RWPE1 (cell line): ENCODE measurements at regions of chr11 and their contacts with region 1.

Region 1: GRCh38 chr11:62427630-62428233 is 8.9 kb downstream of the SCGB1A1 start:
- DNase-seq: no peak
- H3K27ac ChIP-seq: peak overlapping the region; percentile 40; the same call in 1 of the 2 replicates
- CTCF ChIP-seq: no peak

Region 2: GRCh38 chr11:62402960-62403730 is 24.6 kb before region 1 on chr11:
- CTCF ChIA-PET with region 1: interaction called, 11 read pairs
- POLR2A ChIA-PET with region 1: no interaction called
- DNase-seq: no peak
- H3K27ac ChIP-seq: no peak overlapping the region
- CTCF ChIP-seq: no peak

Region 3: DNA sequence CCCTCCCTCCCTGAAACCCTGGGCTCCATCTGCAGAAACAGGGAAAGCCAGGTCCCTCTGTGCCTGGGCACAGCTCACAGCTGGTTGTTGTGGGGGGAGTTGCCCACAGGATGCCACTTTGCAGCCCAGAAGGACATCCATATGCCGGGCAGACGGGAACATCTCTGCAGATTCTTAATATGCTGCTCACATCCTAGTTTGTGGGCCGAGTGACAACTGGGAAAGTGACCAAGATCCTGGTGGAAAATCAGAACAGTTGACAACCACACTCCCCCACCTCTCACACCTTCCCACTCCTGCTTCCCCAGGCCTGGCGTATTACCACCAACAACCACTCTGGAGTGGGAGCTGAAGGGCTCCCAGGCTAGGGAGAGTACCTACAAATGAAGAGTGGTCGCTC is 16.2 kb before region 1 on chr11:
- CTCF ChIA-PET with region 1: interaction called, 16 read pairs
- POLR2A ChIA-PET with region 1: no interaction called
- DNase-seq: no peak
- H3K27ac ChIP-seq: peak overlapping the region; percentile 83
- CTCF ChIP-seq: no peak

Region 4: GRCh38 chr11:62556108-62556871 is 128.6 kb after region 1 on chr11:
- CTCF ChIA-PET with region 1: interaction called, 14 read pairs
- POLR2A ChIA-PET with region 1: no interaction called
- DNase-seq: peak; percentile 99
- H3K27ac ChIP-seq: peak overlapping the region; percentile 100
- CTCF ChIP-seq: no peak

Region 5: DNA sequence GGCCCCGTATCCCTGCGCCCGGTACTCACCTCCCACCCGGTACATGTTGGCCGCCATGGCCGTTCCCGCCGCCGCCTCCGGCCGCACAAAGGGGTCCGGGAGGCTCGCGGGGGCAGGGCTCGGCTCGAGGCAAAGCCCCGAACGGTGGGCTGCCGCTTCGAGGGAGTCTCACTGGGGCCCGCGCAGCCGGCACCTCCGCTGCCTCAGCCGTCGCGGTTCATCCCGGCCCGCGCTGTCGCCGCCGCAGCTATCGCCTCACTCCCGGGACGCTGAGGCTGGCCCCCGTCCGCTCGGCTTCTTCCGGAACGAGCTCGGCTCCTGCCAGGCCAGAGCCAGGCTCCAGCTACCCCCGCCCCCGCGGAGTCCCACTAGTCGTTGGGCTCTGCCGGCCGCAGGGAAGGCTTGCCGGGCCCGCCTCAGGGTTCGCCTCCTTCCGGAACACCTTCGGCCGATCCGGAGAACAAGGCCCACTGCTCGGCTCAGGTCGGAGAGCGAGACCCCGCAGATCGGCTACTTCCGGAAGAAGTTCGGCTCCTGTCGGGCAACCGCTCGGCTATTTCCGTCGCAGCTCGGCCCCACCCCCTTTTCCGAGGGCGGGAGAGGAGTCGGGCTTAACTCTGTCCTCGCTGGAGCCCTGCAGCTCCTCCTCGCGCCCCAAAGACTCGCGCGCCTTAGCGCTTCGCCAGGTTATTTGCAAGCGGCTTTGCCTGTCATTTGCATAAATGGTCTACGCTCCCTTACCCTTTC is 173.8 kb after region 1 on chr11 and contains the start of gene MTA2:
- CTCF ChIA-PET with region 1: no interaction called
- POLR2A ChIA-PET with region 1: no interaction called
- DNase-seq: peak; percentile 92
- H3K27ac ChIP-seq: peak within 1 kb of the TSS; percentile 98
- CTCF ChIP-seq: no peak